ENCODE measurements at regions of chr5 and their contacts with region 1.

Region 1: DNA sequence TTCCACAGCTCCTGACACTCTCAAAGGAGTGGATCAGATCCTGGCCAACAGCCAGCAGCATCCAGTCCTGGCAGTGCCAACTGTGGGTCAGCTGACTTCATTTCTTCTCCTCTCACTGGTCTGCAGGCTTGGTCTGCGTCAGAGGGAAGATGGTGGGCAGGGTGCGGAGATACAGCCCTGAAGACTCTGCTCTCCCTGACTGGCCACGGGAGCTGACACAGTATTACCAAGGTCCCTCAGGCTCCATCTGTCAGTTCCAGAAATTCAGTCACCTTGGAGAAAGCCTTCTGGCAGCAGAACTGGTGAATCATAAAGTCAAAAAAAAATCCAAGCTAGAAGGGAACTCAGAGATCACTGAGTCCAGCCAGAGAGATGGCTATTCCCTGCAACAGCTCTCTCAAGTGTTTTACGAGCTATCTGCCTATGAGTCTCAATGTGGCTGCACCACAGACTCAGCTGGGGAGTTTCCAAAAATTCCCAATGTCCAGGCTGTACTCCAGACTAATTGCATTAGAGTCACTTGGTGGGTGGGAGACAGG is 28.0 kb downstream of the C1QTNF2 start:
- DNase-seq: no peak
- H3K4me3 ChIP-seq: no peak overlapping the region
- H3K27ac ChIP-seq: peak overlapping the region in 6 of 8 donors; percentile 7 to 78 (median 66)
- H3K4me1 ChIP-seq: peaks cover 0 to 14% (median 8%) of the 10 kb centered on the region in 6 donors
- H3K27me3 ChIP-seq: no peaks in the 10 kb centered on the region
- CTCF ChIP-seq: no peak
- POLR2A ChIP-seq: no peak

Region 2: DNA sequence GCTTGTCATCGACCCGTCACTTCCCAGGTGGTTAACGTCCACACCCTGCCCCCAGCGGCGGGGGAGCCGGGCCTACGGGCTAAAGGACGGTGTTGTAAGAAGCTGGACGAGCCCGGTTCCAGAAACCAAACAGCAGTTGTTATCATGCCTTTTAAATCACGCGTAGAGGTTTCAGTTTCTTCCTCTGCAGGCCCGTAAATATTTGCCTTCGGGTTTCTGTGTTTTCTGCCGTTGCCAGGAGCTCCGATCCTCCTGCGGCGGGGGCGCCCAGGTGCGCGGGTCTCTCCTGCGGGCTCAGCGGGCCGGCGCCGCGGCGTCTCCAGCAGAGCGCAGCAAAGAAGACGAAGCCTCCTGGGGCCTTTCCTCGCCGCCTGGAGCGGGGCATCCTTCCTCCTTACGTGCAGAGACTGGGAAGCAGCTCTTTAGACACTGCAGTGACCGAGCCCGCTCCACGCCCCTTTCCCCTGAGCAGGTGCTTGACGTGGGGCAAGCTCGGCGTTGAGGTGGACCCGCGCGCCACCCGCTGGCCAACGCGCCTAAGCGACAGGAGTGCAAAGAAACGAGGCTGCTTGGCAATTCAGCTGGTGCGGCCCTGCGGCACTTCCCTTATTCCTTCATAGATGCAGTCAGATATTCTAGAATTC is 355.3 kb before region 1 on chr5:
- intact Hi-C with region 1: no loop called
- DNase-seq: peak; percentile 95
- H3K4me3 ChIP-seq: peak overlapping the region; percentile 22 to 72 (median 44)
- H3K27ac ChIP-seq: peak overlapping the region in 1 of 8 donors; percentile 24
- H3K4me1 ChIP-seq: peaks cover 0 to 13% (median 10%) of the 10 kb centered on the region in 6 donors
- H3K27me3 ChIP-seq: peaks cover 0 to 39% (median 3%) of the 10 kb centered on the region in 7 donors
- CTCF ChIP-seq: peak; percentile 35 to 79 (median 68)
- POLR2A ChIP-seq: no peak

Region 3: DNA sequence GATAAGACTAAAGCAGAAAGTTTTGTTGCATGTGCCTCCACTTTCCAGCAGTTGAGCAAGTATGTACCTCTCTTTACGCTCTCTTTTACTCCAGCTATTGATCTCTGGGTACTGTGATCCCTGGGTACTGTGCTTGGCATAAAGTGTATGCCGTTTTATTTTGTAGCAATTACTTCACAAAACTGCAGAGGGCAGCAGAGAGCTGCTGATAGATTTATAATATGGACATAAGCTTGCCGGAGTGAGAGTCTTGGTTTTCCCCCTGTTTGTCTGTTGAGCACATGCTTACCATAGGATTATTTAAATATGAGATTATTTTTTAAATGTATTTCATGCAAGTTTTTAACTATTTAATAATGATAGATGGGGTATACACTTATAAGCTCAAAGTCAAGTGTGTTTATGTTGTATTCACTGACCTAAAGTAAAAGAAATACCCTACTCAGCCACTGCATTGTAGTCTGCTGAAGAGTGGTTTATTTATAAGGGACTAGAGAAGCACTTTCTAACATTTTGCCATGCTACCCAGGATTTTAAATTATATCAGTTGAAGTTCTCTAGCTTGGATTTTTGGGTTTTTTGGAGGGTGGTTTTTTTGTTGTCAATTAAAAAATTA is 320.5 kb before region 1 on chr5:
- intact Hi-C with region 1: loop called (anchors 5 kb)
- DNase-seq: no peak
- H3K4me3 ChIP-seq: no peak overlapping the region
- H3K27ac ChIP-seq: no peak overlapping the region
- H3K4me1 ChIP-seq: peaks cover 6 to 40% (median 18%) of the 10 kb centered on the region in 6 donors
- H3K27me3 ChIP-seq: no peaks in the 10 kb centered on the region
- CTCF ChIP-seq: peak; percentile 42 to 81 (median 76)
- POLR2A ChIP-seq: no peak

Region 4: GRCh38 chr5:160082614-160083500 is 259.6 kb before region 1 on chr5:
- intact Hi-C with region 1: loop called (anchors 5 kb)
- DNase-seq: no peak
- H3K4me3 ChIP-seq: no peak overlapping the region
- H3K27ac ChIP-seq: peak overlapping the region in 2 of 8 donors; percentile 8 to 41
- H3K4me1 ChIP-seq: peaks cover 0 to 8% (median 2%) of the 10 kb centered on the region in 6 donors
- H3K27me3 ChIP-seq: no peaks in the 10 kb centered on the region
- CTCF ChIP-seq: no peak
- POLR2A ChIP-seq: no peak

Region 5: GRCh38 chr5:160199410-160199911 is 143.0 kb before region 1 on chr5:
- intact Hi-C with region 1: loop called (anchors 5 kb)
- DNase-seq: peak; percentile 96
- H3K4me3 ChIP-seq: peak overlapping the region in 7 of 8 donors; percentile 3 to 66 (median 26)
- H3K27ac ChIP-seq: peak overlapping the region in 4 of 8 donors; percentile 27 to 67 (median 32)
- H3K4me1 ChIP-seq: peaks cover 0 to 33% (median 23%) of the 10 kb centered on the region in 6 donors
- H3K27me3 ChIP-seq: peaks cover 0 to 30% (median 0%) of the 10 kb centered on the region in 7 donors
- CTCF ChIP-seq: peak; percentile 52 to 99 (median 92)
- POLR2A ChIP-seq: no peak

Measured in spleen (tissue), 13 donors.